Thyroid gland (tissue), 4 donors: ENCODE measurements at regions of chr13 and their contacts with region 1.

Region 1: GRCh38 chr13:99656092-99656745 is 154.9 kb downstream of the TM9SF2 start:
- DNase-seq: peak; percentile 73 to 78
- H3K4me3 ChIP-seq: no peak overlapping the region
- H3K27ac ChIP-seq: no peak overlapping the region
- H3K4me1 ChIP-seq: peaks cover 3 to 9% of the 10 kb centered on the region in 2 donors
- H3K27me3 ChIP-seq: no peaks in the 10 kb centered on the region
- CTCF ChIP-seq: peak; percentile 64 to 91 (median 87)
- POLR2A ChIP-seq: no peak

Region 2: DNA sequence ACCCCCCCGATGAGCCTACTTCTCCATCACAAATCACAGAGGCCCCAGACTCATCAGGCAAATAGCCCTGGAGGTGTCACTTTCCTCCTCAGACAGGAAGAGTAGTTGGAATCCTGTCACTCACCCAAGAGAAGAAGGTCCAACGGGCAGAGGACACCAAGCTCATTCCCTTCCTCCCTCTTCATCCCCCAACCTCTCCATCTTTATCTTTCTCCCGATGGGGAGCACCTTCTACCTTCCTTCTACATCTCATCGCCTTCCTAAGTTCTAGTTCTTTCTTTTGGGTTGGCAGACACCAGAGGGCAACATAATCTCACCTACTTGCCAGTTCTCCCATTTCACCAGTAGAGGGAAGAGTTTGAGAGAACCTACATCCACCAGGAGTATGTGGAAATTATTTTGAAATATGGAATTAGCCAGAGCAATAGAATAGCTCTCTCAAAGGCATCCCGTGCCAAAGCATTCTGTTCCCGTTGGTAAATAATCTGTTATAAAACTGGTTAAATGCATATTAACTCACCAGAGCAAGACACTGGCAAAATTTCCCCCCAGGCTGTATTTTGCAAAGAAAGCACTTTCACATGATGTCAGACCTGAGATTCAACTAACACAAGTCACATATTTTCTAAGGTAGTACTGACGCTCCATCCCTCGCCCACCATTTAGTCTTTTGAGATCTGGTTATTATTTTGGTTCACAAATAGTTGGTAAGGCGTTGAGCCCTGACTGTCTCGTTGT is 260.3 kb after region 1 on chr13:
- intact Hi-C with region 1: loop called (anchors 5 kb)
- DNase-seq: peak in 1 of 2 donors; percentile 11
- H3K4me3 ChIP-seq: no peak overlapping the region
- H3K27ac ChIP-seq: no peak overlapping the region
- H3K4me1 ChIP-seq: no peaks in the 10 kb centered on the region
- H3K27me3 ChIP-seq: no peaks in the 10 kb centered on the region
- CTCF ChIP-seq: peak; percentile 38 to 99 (median 90)
- POLR2A ChIP-seq: no peak

Region 3: GRCh38 chr13:99980201-99980823 is 324.1 kb after region 1 on chr13:
- intact Hi-C with region 1: loop called (anchors 10 kb)
- DNase-seq: peak; percentile 54 to 59
- H3K4me3 ChIP-seq: peak overlapping the region in 1 of 3 donors; percentile 23
- H3K27ac ChIP-seq: no peak overlapping the region
- H3K4me1 ChIP-seq: peaks cover 16 to 35% of the 10 kb centered on the region in 2 donors
- H3K27me3 ChIP-seq: peaks cover 79% of the 10 kb centered on the region
- CTCF ChIP-seq: no peak
- POLR2A ChIP-seq: no peak

Region 4: DNA sequence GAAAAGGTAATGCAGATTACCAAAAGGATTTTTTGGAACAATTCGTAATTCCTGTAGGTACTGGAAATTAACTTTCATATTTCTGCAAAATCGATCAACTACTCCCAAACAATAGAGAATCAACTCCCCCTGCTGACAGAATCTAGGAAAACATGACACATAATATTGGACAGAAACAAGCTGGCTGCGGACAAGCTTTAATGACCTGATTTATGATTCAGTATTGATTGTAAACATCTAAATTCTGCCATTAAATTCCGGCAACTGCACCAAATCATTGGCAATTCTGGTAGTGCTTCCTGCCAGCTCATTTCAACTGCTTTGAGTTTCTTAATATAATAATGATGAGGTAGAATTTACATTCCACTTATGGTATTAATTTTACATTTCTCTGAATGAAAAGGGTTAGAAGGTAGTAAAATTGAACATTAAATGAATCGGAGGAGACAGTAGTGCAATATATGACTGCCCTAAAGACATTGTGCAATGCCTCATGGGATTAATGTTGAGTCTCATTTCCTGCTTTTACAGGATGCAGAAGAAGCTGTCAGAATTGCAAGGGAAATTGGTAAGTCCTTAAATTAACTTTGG is 579.2 kb after region 1 on chr13:
- intact Hi-C with region 1: loop called (anchors 10 kb)
- DNase-seq: no peak
- H3K4me3 ChIP-seq: no peak overlapping the region
- H3K27ac ChIP-seq: no peak overlapping the region
- H3K4me1 ChIP-seq: peaks cover 8% of the 10 kb centered on the region in 2 donors
- H3K27me3 ChIP-seq: no peaks in the 10 kb centered on the region
- CTCF ChIP-seq: peak in 5 of 6 experiments; percentile 39 to 93 (median 71)
- POLR2A ChIP-seq: no peak

Region 5: DNA sequence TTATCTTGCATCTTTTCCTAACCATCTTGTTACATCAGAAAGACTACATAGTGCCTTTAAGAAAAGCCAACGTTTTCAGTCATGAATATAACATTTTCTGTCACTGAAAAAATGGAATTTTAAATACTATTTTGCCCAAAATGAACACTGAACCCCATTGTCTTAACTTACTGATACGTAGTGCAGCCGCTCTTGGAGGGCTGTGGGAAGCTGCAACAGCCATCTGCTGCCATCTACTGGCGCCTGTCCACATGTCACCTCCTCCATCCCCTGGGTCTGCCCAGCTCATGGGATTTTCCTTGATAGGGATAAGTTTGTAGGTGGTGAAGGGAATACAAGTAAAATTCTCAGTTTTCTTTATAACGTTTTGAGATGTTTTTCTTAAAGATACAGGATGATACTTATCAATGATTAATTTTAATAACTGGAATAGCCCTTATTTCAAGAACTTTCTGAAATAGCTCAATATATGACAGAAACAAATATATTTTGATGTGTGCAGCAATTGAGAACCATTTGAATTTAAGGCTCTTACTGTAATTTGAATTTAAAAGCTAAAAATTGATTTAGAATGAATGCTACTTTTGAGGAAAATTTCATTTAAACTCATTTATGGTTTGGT is 858.7 kb after region 1 on chr13:
- intact Hi-C with region 1: loop called (anchors 5 kb)
- DNase-seq: peak; percentile 77 to 84
- H3K4me3 ChIP-seq: no peak overlapping the region
- H3K27ac ChIP-seq: no peak overlapping the region
- H3K4me1 ChIP-seq: no peaks in the 10 kb centered on the region
- H3K27me3 ChIP-seq: no peaks in the 10 kb centered on the region
- CTCF ChIP-seq: peak; percentile 56 to 92 (median 84)
- POLR2A ChIP-seq: no peak